GM10248 (cell line): ENCODE measurements at regions of chr14 and their contacts with region 1.

Region 1: DNA sequence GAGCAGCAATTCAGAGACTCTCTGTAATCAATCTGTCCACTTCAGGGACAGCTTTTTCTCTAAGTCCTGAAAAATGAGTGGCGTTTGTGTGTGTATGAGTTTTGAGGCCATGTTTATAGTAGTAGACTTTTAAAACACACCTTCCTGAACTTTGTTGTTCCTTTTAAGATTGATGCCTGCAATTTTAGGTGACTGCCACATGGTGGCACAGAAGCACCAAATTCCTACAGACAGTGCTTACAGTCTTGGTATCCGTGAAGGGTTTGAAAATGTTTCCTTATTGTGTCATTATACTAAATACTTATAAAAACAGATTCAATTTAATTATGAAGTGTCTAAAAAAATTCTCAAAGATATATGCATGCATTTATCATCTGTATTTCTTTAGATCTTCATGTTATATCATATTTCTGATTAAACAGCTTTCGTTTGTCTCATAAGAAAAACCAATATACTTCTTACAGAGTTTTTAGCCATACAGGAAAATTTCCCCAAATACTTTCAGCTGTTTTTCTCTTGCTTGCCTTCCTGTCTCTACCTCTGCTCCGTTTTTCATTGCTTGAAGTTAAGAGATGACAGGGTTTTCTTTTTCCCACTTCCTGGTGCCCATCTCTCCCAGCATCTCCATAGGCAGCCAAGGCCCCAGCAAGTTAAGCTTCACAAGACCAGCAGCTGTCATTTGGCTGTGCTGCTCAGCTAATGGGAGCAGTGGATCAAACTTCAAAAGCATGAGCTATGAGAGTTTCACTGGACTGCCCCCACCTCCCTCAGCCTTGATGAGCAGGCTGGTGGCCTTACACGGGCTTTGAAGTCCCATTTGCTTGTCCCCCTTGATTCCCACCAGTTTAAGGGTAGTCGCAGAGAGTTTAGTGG is 259.6 kb downstream of the AKAP6 start:
- DNase-seq: peak; percentile 36
- CTCF ChIP-seq: peak; percentile 48

Region 2: DNA sequence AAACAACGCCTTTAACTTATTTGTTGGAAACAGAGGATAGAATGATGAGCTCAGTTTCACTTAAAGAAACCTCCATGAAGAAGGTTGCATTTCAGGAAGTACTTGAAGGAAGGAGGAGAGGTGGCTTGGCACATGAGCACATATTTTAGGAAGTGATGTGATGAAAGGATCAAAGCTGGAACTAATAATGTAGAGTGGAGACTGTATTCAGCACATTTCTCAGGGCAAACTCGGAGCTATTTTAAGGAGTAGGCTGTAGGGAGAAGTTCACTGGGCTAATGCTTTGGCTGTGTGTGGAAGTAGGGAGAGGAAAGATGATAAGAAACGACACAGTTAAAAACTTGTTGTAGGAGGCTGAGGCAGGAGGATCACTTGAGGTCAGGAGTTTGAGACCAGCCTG is 13.2 kb after region 1 on chr14:
- CTCF ChIA-PET with region 1: interaction called, 13 read pairs
- POLR2A ChIA-PET with region 1: no interaction called
- DNase-seq: no peak
- CTCF ChIP-seq: no peak